ENCODE measurements at regions of chr2 and their contacts with region 1.

Region 1: GRCh38 chr2:65169760-65170136 is 39.8 kb upstream of the RAB1A start:
- DNase-seq: no peak

Region 2: DNA sequence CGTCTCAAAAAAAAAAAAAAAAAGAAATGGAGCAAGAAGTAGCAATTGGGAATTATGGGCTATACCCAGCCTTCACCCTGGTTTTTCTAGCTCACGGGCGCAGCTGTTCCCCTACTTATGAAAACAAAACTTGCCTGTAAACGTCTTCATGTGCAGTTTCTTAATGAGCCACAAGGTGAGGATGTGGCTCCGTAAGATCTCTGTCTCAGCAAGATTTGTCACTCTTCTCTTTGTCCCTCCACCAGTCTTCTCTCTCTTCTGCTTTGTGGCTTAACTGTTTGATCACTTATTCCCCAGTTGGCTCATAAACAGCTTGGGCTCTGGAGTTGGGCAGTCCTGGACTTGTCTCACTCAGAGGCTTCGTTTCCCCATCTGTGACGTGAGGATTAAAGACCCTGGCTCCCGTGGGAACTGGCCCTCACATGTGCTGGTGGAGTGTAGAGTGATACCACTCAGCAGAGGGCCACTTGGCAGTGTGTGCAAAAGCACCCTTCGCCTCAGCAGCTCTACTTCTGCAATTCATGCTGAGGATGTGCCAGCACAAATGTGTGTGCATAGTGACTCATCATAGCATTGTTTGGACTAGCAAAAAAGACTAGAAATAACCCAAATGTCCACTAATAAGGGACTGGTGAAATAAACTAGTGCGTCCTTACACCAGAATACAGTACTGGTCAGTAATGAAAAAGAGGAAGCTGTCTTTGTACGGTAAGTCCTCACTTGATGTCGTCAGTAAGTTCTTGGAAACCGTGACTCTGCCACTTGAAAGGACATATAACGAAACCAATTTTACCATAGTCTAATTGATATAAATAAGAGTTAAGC is 104.8 kb before region 1 on chr2:
- intact Hi-C with region 1: loop called (anchors 1 kb)
- DNase-seq: no peak

Region 3: DNA sequence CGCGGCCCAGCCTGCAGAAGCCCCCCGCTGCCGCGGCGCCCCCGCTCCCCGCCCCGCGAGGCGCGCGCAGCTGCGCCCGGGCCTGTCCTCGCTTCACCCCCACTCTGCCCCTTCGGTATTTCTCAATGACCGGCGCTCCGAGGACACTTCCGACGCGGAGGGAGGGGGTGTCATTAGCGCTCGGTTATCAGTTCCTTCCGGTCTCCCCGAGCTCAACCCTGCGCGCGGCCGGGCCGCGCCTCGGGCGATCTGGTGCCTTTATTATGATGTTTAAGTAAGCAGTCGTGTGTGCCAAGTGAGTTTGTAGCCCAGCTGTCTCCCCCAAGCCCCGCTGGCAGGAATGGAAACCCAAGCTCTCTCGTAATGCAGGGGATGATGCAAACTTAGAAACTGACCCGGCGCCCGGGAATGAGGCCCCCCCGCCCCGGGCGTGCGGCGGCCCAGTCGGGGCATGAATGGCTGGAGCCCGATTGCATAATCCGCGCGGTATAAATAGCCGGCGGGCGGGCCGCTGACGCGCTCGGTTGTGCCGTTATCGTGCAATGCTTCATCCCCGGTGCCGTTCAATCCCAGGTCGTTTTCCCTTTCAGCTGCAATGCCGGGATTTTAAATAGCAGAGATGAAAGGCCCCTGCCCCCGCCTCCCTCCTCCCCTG is 266.5 kb after region 1 on chr2:
- intact Hi-C with region 1: no loop called
- DNase-seq: peak; percentile 95

Region 4: GRCh38 chr2:65762068-65762467 is 592.3 kb after region 1 on chr2:
- intact Hi-C with region 1: no loop called
- DNase-seq: no peak